Dendritic cell treated with granulocyte-macrophage colony-stimulating factor and Interleukin-4, amounts not matched to agents 40 ng/mL and 50 ng/mL, for 4 days (primary cell): ENCODE measurements at regions of chr2 and their contacts with region 1.

Region 1: GRCh38 chr2:54115284-54116137 is at the start of gene ACYP2:
- H3K4me3 Mint-ChIP-seq: peak within 1 kb of the TSS; percentile 83
- H3K27ac Mint-ChIP-seq: peak within 1 kb of the TSS; percentile 100
- H3K4me1 Mint-ChIP-seq: peaks cover 7% of the 10 kb centered on the region
- H3K27me3 Mint-ChIP-seq: peaks cover 2% of the 10 kb centered on the region

Region 2: DNA sequence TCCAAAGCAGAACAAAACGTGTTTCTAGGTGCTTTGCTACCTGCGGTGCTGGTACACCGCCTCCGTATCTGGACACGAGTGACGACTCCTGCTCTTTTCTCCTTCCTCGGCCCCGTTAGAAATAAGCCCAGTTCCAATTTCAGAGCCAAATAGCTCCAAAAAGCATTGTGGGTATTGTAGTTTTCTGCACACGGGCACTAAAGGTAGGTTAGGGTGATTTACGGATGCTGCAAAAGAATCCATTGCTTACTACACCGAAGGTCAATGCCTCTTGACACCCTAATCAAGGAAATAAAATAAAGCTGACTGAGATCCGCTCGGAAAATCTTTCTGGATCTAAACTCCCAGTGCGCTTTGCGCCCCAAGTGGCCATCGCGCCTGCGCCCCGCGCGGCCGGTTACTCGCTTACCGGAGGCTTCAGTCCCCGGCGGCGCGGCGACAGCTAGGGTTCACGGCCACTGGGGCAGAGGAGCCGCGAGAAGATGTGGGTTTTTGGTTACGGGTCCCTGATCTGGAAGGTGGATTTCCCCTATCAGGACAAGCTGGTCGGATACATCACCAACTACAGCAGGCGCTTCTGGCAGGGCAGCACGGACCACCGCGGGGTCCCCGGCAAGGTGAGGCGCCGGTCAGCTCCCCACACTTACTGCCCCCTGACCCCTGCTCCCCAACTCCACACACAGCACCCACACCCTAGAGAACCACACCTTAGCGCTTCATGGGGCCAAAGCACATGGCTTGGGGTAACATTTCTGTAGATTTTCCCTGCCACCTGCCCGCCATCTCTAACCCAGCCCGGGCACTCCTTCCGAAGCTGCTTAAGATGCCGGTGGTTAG is 347.9 kb before region 1 on chr2 and contains the start of gene CHAC2:
- intact Hi-C with region 1: loop called (anchors 10 kb)
- H3K4me3 Mint-ChIP-seq: peak within 1 kb of the TSS; percentile 91
- H3K27ac Mint-ChIP-seq: peak within 1 kb of the TSS; percentile 86
- H3K4me1 Mint-ChIP-seq: peaks cover 6% of the 10 kb centered on the region
- H3K27me3 Mint-ChIP-seq: no peaks in the 10 kb centered on the region

Region 3: DNA sequence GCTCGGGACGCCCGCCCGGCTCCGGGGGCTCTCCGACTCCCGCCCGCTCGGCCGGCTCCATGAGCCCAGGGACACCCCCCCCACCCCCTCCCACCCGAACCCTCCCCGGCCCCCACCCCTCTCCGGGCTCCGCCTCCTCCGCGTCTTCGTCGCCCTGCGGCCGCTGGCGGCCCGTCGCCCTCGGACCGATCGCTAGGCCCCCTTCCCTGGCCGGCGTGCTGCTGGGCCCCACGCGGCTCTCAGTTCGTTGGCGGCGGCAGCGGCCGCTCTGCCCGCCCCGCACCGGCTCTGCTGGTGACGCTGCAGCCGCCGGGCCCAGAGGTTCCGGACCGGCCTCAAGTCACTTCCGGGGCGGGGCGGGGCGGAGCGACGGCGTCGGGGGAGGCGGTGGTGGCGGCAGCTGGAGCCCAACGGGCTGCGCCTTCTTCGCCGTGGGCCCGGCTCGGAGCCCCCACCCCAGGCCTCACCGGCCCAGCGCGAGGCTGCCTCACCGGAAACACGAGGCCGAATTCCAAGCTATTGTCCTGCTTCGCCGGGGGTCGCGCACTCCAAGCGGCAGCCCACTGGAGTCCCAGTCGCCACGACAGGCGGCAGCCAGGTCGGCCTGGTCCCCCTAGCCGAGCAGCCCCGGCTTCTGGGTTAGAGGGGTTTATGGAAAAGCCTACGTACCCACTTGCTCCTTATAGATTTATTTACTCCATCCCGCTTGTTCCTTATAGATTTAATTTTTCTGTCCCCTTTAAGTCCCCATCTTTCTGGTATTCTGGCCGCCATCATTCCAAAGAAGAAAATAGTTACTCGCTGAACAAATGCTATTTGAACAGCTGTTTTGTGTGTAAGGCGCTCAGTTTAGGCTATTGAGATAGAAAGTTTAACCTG is 144.5 kb before region 1 on chr2 and contains the start of gene PSME4:
- intact Hi-C with region 1: loop called (anchors 2 kb)
- H3K4me3 Mint-ChIP-seq: peak within 1 kb of the TSS; percentile 96
- H3K27ac Mint-ChIP-seq: peak within 1 kb of the TSS; percentile 95
- H3K4me1 Mint-ChIP-seq: peaks cover 65% of the 10 kb centered on the region
- H3K27me3 Mint-ChIP-seq: no peaks in the 10 kb centered on the region

Region 4: GRCh38 chr2:55693181-55694134 is 1577.9 kb after region 1 on chr2 and contains the start of gene PNPT1:
- intact Hi-C with region 1: loop called (anchors 10 kb)
- H3K4me3 Mint-ChIP-seq: peak within 1 kb of the TSS; percentile 94
- H3K27ac Mint-ChIP-seq: peak within 1 kb of the TSS; percentile 82
- H3K4me1 Mint-ChIP-seq: peaks cover 10% of the 10 kb centered on the region
- H3K27me3 Mint-ChIP-seq: peaks cover 1% of the 10 kb centered on the region